Head of caudate nucleus (tissue), 42 donors: ENCODE measurements at regions of chr19 and their contacts with region 1.

Region 1: GRCh38 chr19:6737284-6738046 is at the start of gene GPR108:
- DNase-seq: peak; percentile 99 to 100 (median 100)

Region 2: GRCh38 chr19:6530386-6531161 is 206.9 kb before region 1 on chr19 and contains the start of gene TNFSF9:
- intact Hi-C with region 1: loop called (anchors 10 kb)
- DNase-seq: peak; percentile 94 to 99 (median 97)

Region 3: DNA sequence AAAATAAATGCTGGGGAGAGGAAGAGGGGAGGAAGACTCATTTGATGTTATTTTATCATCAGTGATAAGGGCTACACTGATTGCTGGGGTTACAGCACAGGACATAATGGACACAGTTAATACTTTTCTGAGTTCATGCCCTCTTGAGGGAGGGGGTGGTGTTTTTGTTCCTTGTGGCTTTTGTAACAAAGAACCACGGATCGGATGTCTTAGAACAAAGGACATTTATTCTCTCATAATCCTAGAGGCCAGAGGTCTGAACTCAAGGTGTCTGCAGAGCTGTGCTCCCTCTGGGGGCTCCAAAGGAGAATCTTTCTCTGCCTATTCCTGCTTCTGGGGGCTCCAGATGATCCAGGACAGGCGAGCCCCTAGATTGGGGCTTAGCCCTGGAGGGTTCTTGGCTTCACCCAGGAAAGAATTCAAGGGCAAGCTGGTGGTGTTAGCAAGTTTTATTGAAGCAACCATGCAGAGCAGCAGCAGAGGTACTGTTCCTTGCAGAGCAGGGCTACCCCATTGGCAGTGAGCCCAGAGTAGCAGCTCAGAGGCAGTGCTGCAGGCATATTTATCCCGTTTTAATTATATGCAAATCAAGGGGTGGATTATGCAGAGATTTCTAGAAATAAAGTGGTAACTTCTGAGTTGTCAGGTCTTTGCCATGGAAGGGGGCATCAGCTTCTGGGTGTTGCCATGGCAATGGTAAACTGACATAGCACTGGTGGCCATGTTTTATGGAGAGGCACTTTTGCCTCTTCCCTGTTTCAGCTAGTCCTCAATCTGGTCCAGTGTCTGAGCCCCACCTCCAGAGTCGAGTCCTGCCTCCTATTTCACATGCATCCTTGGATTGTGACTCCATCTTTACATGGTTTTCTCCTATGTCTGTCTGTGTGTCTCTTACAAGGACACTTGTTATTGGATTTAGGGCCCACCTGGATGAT is 53.0 kb after region 1 on chr19:
- intact Hi-C with region 1: no loop called
- DNase-seq: no peak

Region 4: DNA sequence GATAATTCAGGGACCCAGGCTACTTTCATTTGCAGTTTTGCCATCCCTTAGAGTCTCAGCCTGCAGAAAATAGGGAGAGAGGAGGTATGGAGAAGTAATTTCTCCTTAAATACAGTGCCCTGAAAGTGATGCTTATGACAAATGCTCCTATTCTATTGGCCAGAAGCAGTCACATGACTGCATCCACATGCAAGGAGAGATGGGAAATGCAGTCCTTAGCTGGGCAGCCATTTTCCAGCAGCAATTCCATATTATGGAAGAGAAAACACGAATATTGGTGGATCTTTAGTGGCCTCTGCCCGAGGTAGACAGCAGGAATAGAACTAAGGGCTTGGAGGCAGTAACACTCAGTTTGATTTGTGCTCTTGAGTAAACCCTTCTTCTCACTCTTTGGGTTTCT is 74.4 kb after region 1 on chr19:
- intact Hi-C with region 1: no loop called
- DNase-seq: peak in 17 of 42 donors; percentile 8 to 66 (median 43)

Region 5: GRCh38 chr19:6862673-6863078 is 125.2 kb after region 1 on chr19:
- intact Hi-C with region 1: loop called (anchors 5 kb)
- DNase-seq: peak; percentile 59 to 88 (median 76)